ENCODE measurements at regions of chr5 and their contacts with region 1.

Region 1: DNA sequence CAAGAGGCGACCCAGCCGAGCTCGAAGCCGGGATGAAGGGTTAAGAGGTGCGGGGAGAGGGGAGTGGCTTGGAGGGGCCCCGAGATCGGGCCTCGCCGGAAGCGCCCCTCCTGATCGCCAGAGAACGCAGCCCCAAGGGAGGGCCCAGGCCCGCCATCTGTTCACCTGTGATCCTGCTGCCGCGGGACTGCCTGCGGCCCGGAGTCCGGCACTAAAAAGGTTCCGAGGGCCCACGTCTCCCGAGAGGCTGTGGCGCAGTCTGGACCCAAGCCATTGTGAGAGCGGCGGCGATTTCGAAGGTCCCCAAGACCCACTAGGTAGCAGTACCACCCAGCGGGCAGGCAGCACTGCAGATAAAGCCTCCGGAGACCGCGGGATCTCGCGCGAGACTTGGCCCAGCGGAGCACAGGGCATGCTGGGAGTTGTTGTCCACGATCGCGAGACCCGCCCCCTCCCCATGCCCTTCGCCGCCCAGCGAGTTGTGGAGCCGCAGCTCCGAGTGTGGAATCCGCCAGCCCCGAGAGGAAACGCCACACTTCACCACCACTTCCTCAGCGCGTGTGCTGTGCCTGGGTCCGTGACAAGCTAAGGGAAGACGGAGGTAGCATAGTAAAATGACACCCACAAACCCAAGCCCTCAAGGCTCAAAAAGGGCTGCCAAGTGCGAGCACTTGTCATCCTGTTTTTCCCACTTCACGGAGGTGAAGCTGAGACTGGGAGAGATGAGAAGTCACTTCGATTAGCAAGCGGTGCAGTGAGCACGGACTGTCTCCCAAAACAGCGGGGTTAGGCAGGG is at the start of gene KIAA1191:
- DNase-seq: peak; percentile 83
- ATAC-seq: peak; percentile 95
- H3K4me3 ChIP-seq: peak within 1 kb of the TSS; percentile 85
- H3K27ac ChIP-seq: peak within 1 kb of the TSS; percentile 81
- H3K4me1 ChIP-seq: no peaks in the 10 kb centered on the region; the same call in 1 of the 2 replicates
- H3K27me3 ChIP-seq: no peaks in the 10 kb centered on the region
- CTCF ChIP-seq: peak; percentile 10 to 51 (median 31); a peak in 3 of 6 replicates
- EP300 ChIP-seq: no peak
- POLR2A ChIP-seq: peak; percentile 100
- RAD21 ChIP-seq: peak; percentile 29; the same call in 1 of the 2 replicates
- polyA plus RNA-seq, gene KIAA1191: 14.9 to 16.3 TPM

Region 2: GRCh38 chr5:176388444-176389134 is 27.0 kb after region 1 on chr5 and contains the starts of genes HIGD2A and NOP16:
- CTCF ChIA-PET with region 1: interaction called, 4 read pairs
- POLR2A ChIA-PET with region 1: interaction called, 9 read pairs
- RAD21 ChIA-PET with region 1: interaction called, 5 read pairs
- SMC1A ChIA-PET with region 1: interaction called, 7 read pairs
- in situ Hi-C with region 1: no loop called
- intact Hi-C with region 1: loop called (anchors 1 kb)
- DNase-seq: peak; percentile 97
- ATAC-seq: peak; percentile 91
- H3K4me3 ChIP-seq: peak within 1 kb of the TSS; percentile 90
- H3K27ac ChIP-seq: peak within 1 kb of the TSS; percentile 97
- H3K4me1 ChIP-seq: peaks cover 11% of the 10 kb centered on the region
- H3K27me3 ChIP-seq: no peaks in the 10 kb centered on the region
- CTCF ChIP-seq: no peak
- EP300 ChIP-seq: no peak
- POLR2A ChIP-seq: peak; percentile 90
- RAD21 ChIP-seq: no peak
- polyA plus RNA-seq, gene HIGD2A: 196 to 327 TPM
- polyA plus RNA-seq, gene NOP16: 177 to 196 TPM